H1 (cell line): ENCODE measurements at regions of chr3 and their contacts with region 1.

Region 1: GRCh38 chr3:37855363-37855970 is 6.2 kb upstream of the CTDSPL start:
- DNase-seq: peak in 1 of 2 experiments; percentile 96
- H3K4me3 ChIP-seq: no peak overlapping the region
- H3K27ac ChIP-seq: no peak overlapping the region
- H3K4me1 ChIP-seq: peaks cover 0 to 4% (median 2%) of the 10 kb centered on the region in 4 experiments; a peak in 4 of 7 replicates
- H3K27me3 ChIP-seq: peaks cover 0 to 10% (median 7%) of the 10 kb centered on the region in 4 experiments; a peak in 4 of 7 replicates
- CTCF ChIP-seq: peak; percentile 95 to 98 (median 97)
- EP300 ChIP-seq: no peak
- POLR2A ChIP-seq: no peak
- RAD21 ChIP-seq: peak; percentile 95 to 96

Region 2: GRCh38 chr3:37872413-37873160 is 17.1 kb after region 1 on chr3:
- CTCF ChIA-PET with region 1: interaction called, 14 read pairs
- POLR2A ChIA-PET with region 1: interaction called, 3 read pairs
- DNase-seq: no peak
- H3K4me3 ChIP-seq: no peak overlapping the region
- H3K27ac ChIP-seq: no peak overlapping the region
- H3K4me1 ChIP-seq: peaks cover 0 to 5% (median 4%) of the 10 kb centered on the region in 4 experiments; a peak in 3 of 7 replicates
- H3K27me3 ChIP-seq: no peaks in the 10 kb centered on the region
- CTCF ChIP-seq: no peak
- EP300 ChIP-seq: no peak
- POLR2A ChIP-seq: no peak
- RAD21 ChIP-seq: no peak

Region 3: GRCh38 chr3:37907906-37908305 is 52.4 kb after region 1 on chr3:
- CTCF ChIA-PET with region 1: interaction called, 50 read pairs
- POLR2A ChIA-PET with region 1: no interaction called
- DNase-seq: no peak
- H3K4me3 ChIP-seq: no peak overlapping the region
- H3K27ac ChIP-seq: no peak overlapping the region
- H3K4me1 ChIP-seq: peaks cover 1 to 14% (median 9%) of the 10 kb centered on the region in 4 experiments; a peak in 6 of 7 replicates
- H3K27me3 ChIP-seq: no peaks in the 10 kb centered on the region
- CTCF ChIP-seq: no peak
- EP300 ChIP-seq: no peak
- POLR2A ChIP-seq: no peak
- RAD21 ChIP-seq: no peak

Region 4: DNA sequence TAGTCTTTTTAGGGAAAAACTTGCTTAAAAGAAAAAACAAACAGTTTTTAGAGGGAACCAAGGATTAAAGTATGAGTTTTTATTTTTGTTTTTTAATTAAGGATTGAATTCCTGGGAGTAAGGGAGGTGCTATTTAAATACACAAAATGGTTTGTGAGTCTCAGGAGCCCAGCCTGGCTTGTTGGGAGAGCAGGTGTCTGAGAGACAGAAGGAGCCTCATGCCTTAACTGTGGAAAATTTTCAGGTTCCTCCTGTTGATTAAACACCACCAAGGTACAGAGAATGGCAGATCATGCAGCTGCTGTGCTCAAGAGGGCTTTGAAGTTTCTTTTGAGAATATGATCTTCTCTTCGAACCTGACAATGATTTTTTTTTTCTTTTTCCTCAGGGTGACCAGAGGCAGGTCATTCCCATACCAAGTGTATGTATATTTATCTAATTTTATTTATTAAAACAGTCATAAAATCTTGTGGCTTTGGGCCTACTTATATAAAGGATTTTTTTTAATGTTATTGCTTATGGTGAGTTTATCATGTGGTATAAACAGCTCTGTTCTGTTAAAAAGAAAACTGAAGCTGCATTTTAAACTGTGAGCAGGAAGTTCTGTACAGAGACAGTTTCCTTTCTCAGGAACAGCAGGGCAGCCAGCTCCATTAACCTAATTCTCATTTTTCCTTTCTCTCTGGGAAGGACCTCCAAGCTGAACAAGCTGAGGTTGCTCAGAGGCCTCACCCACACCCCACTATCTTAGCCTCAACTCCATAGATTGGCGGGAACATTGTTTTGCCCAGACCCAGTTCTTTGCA is 101.5 kb after region 1 on chr3:
- CTCF ChIA-PET with region 1: interaction called, 23 read pairs
- POLR2A ChIA-PET with region 1: no interaction called
- DNase-seq: no peak
- H3K4me3 ChIP-seq: no peak overlapping the region
- H3K27ac ChIP-seq: 0 out of 2 replicates have a peak overlapping the region, but pooled peaks have one; percentile 38
- H3K4me1 ChIP-seq: peaks cover 0 to 11% (median 7%) of the 10 kb centered on the region in 4 experiments; a peak in 3 of 7 replicates
- H3K27me3 ChIP-seq: no peaks in the 10 kb centered on the region
- CTCF ChIP-seq: no peak
- EP300 ChIP-seq: no peak
- POLR2A ChIP-seq: no peak
- RAD21 ChIP-seq: no peak

Region 5: DNA sequence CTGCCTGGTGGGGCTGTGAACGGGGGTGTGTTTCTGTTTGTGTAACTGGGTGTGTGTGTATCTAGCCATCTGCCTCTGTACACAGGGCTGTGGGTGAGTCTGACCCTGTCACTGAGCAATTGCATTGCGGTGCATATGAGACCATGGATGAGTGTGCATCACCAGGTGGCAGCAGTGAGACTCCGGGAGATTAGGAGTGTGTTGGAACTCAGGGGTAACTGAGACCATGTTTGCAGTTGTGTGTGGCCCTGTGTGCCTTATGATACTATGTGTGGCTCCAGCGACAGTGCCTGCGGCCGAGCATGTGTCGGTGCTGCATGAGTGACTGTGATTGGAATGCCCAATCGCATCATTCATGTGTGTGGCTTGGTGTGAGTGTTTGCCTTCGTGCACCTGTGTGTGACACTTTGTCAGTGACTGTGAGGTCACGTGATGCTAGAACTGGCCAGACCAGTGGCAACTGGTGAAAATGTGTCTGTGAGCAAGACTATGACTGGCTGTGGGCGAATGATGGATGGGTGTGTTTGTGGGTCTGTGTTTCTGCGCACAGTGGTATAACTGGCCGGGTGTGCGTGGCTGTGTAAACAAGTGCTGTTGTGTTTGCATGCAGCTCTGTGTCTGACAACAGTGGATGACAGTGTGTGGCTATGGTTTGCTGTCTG is 149.1 kb after region 1 on chr3:
- CTCF ChIA-PET with region 1: interaction called, 75 read pairs
- POLR2A ChIA-PET with region 1: interaction called, 3 read pairs
- DNase-seq: peak in 1 of 2 experiments; percentile 70
- H3K4me3 ChIP-seq: no peak overlapping the region
- H3K27ac ChIP-seq: no peak overlapping the region
- H3K4me1 ChIP-seq: no peaks in the 10 kb centered on the region
- H3K27me3 ChIP-seq: no peaks in the 10 kb centered on the region
- CTCF ChIP-seq: peak in 2 of 3 experiments; percentile 59 to 79; a peak in 3 of 4 replicates
- EP300 ChIP-seq: no peak
- POLR2A ChIP-seq: no peak
- RAD21 ChIP-seq: peak; percentile 53 to 58

Region 6: DNA sequence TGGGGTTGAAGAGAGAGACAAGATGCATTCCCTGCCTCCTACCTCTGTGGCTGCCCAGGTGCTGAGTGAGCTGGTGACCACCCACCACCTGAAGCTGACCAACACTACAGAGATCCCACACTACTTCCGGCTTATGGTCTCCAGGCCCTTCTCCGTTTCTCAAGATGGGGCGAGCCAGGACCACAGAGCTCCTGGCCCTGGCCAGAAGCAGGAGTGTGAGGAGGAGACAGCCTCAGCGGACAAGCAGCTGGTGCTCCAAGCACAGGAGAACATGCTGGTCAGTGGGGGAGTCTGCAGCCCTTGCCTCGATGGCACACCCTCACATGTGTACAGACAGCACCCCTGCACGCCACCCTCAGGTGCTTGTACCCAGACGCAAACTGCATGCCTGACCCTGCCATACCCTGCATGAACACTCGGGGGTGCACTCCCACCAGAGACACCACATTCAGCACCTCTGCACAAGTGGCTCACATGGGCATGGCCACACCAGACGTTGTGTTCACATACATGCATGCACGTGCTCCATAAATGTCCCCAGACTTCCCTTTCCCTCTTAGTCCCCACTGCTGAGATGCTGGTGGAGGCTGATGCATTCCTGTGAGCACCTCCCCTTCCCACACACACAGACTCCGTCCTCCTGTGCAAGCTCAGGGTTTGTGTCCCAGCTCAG is 262.4 kb after region 1 on chr3:
- CTCF ChIA-PET with region 1: no interaction called
- POLR2A ChIA-PET with region 1: no interaction called
- DNase-seq: peak in 1 of 2 experiments; percentile 87
- H3K4me3 ChIP-seq: no peak overlapping the region
- H3K27ac ChIP-seq: no peak overlapping the region
- H3K4me1 ChIP-seq: no peaks in the 10 kb centered on the region
- H3K27me3 ChIP-seq: no peaks in the 10 kb centered on the region
- CTCF ChIP-seq: peak in 2 of 3 experiments; percentile 83 to 96; a peak in 3 of 4 replicates
- EP300 ChIP-seq: no peak
- POLR2A ChIP-seq: no peak; a peak in 1 of 3 replicates
- RAD21 ChIP-seq: peak; percentile 86 to 87